CD8-positive, alpha-beta T cell (primary cell): ENCODE measurements at regions of chr3 and their contacts with region 1.

Region 1: DNA sequence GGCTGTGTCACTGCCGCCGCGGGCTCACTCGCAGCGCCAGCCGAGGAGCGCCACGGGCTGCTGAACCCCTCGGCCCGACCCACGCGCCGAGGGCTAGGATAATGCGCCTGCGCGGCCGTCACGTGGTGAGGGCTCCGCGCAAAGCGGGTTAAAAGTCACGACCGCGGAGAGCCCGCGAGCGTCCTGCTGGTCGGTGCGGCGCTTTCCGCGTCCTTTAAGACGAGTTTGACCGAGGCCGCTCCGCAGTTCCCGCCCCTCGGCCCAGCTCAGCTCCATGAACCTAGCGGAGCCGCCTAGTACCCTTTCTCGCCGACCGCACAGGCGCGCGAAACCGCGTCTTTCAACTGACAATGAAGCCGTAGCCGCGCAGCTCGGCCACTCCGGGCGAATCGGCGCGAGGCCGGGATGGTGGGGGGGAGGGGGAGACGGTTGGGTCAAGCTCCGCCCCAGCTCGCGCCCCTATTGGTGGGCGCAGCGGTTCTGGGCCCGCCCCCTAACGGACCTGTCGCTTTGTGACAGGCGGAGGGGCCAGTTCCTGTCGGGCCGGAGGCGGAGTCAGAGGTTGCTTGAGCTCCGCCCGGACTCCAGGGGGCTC is 636 bp upstream of the STT3B start:
- DNase-seq: peak; percentile 97 to 99 (median 98)
- ATAC-seq: peak; percentile 85
- H3K4me3 ChIP-seq: peak overlapping the region; percentile 70 to 94
- H3K4me3 Mint-ChIP-seq: peak overlapping the region; percentile 99
- H3K27ac ChIP-seq: peak overlapping the region; percentile 86 to 99
- H3K27ac Mint-ChIP-seq: peak overlapping the region; percentile 97
- H3K4me1 ChIP-seq: peaks cover 21% of the 10 kb centered on the region
- H3K4me1 Mint-ChIP-seq: peaks cover 30% of the 10 kb centered on the region
- H3K27me3 ChIP-seq: peaks cover 0 to 3% of the 10 kb centered on the region in 2 experiments
- H3K27me3 Mint-ChIP-seq: no peaks in the 10 kb centered on the region
- CTCF ChIP-seq: no peak

Region 2: DNA sequence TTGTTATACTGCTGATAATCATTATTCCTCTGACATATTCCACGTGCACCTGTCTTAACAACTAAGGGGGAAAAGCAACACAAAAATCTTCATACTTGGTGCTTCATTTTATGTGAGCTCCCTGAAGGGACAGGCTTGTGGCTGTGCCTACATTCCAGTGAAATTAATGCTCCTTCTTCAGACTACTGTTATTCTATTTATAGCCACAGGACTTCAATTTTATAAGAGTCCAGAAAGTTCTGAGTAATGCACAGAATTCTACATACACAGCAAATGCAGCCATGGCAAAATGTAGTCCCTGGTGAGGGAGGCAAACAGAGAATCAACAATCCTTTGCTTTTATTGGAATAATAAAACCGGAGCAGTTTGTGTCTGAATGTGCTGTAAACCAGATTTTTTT is 1834.1 kb before region 1 on chr3:
- CTCF ChIA-PET with region 1: no interaction called
- POLR2A ChIA-PET with region 1: no interaction called
- intact Hi-C with region 1: no loop called
- DNase-seq: no peak
- ATAC-seq: no peak
- H3K4me3 ChIP-seq: no peak overlapping the region
- H3K4me3 Mint-ChIP-seq: no peak overlapping the region
- H3K27ac ChIP-seq: no peak overlapping the region
- H3K27ac Mint-ChIP-seq: no peak overlapping the region
- H3K4me1 ChIP-seq: no peaks in the 10 kb centered on the region
- H3K4me1 Mint-ChIP-seq: no peaks in the 10 kb centered on the region
- H3K27me3 ChIP-seq: no peaks in the 10 kb centered on the region
- H3K27me3 Mint-ChIP-seq: no peaks in the 10 kb centered on the region
- CTCF ChIP-seq: no peak

Region 3: DNA sequence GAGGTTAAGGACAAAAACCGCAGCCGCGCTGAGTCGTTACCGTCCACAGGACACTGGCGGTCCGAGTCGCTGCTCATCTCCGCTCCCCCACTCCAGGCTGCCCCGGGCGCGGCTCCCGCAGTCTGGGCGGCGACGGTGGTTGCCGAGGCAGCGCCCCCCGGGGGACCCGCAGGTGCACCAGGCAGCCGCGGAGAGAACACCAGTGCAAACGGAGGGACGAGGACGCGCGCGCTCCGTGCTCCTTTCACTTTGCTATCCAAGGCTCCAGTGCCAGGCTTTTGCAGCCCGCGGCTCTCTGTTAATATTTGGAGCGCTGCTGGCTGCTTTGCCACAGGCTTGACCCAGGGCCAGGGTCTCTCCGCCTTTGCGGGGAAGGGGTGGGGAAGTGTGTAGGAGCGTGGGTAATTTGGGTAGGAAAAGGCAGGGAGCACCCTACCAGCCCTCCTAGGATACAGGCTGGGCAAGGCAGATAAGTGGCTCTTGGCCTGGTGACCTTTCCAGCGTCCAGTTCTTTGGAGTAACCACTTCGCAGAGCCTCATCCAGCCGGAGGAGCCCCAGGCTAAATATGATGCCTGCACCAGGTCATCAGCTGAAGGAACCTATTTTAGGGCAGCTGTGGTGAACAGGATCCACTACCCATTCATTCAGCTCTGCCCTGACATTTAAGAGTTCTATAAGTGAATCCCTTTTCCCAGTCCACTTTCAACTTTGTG is 637.4 kb before region 1 on chr3 and contains the start of gene GADL1:
- CTCF ChIA-PET with region 1: no interaction called
- POLR2A ChIA-PET with region 1: no interaction called
- intact Hi-C with region 1: no loop called
- DNase-seq: peak in 2 of 9 experiments; percentile 2 to 6
- ATAC-seq: no peak
- H3K4me3 ChIP-seq: peak within 1 kb of the TSS in 1 of 2 experiments; percentile 35
- H3K4me3 Mint-ChIP-seq: peak within 1 kb of the TSS; percentile 54
- H3K27ac ChIP-seq: no peak within 1 kb of the TSS
- H3K27ac Mint-ChIP-seq: no peak within 1 kb of the TSS
- H3K4me1 ChIP-seq: no peaks in the 10 kb centered on the region
- H3K4me1 Mint-ChIP-seq: peaks cover 19% of the 10 kb centered on the region
- H3K27me3 ChIP-seq: peaks cover 0 to 6% of the 10 kb centered on the region in 2 experiments
- H3K27me3 Mint-ChIP-seq: peaks cover 24% of the 10 kb centered on the region
- CTCF ChIP-seq: no peak
- total RNA-seq, gene GADL1: not detected

Region 4: DNA sequence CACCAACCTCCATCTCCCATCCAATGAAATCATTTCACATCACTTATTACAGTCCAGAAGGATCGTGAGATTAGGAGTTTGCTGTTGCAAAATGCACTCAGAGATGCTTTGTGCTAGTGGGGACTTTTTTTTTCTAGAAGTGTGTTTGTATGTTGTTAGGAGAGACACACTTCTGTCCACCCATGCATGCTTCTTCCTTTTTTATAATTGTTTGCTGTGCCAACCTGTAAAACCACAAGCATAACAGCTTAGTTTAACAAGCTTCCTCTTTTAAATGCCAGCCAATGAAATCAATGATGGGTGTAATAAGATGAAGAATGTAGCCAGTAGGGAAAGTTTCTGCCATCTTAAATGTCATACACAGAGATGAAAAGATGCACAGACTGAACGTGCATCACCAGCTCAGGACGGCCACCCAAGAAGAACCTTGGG is 304.9 kb before region 1 on chr3:
- CTCF ChIA-PET with region 1: interaction called, 3 read pairs
- POLR2A ChIA-PET with region 1: interaction called, 32 read pairs
- intact Hi-C with region 1: loop called in 1 of 2 experiments (anchors 1 kb)
- DNase-seq: peak in 2 of 9 experiments; percentile 65 to 81
- ATAC-seq: peak; percentile 79
- H3K4me3 ChIP-seq: no peak overlapping the region
- H3K4me3 Mint-ChIP-seq: peak overlapping the region; percentile 35
- H3K27ac ChIP-seq: peak overlapping the region; percentile 52 to 76
- H3K27ac Mint-ChIP-seq: peak overlapping the region; percentile 91
- H3K4me1 ChIP-seq: peaks cover 88% of the 10 kb centered on the region
- H3K4me1 Mint-ChIP-seq: peaks cover 86% of the 10 kb centered on the region
- H3K27me3 ChIP-seq: no peaks in the 10 kb centered on the region
- H3K27me3 Mint-ChIP-seq: no peaks in the 10 kb centered on the region
- CTCF ChIP-seq: no peak

Region 5: DNA sequence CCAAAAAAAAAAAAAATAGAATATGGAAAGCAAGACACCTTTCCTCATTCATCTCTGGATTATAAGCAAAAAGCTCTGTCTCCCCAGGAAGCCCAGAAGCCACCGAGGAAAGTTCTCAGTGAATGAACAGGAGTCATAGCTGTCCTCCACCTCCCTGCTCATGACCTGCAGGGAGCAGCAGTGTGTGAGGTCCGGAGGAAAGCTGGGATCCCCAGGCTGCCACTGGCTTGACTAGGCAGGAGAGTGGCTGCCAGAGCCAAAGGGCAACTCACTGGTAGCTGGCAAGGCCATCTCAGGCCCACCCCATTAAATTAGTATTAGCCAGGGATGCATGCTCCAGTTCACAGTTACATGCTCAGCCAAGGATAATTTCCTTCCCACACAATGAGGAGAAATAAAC is 191.0 kb before region 1 on chr3:
- CTCF ChIA-PET with region 1: no interaction called
- POLR2A ChIA-PET with region 1: no interaction called
- intact Hi-C with region 1: no loop called
- DNase-seq: no peak
- ATAC-seq: no peak
- H3K4me3 ChIP-seq: no peak overlapping the region
- H3K4me3 Mint-ChIP-seq: no peak overlapping the region
- H3K27ac ChIP-seq: no peak overlapping the region
- H3K27ac Mint-ChIP-seq: no peak overlapping the region
- H3K4me1 ChIP-seq: no peaks in the 10 kb centered on the region
- H3K4me1 Mint-ChIP-seq: no peaks in the 10 kb centered on the region
- H3K27me3 ChIP-seq: no peaks in the 10 kb centered on the region
- H3K27me3 Mint-ChIP-seq: no peaks in the 10 kb centered on the region
- CTCF ChIP-seq: no peak

Region 6: DNA sequence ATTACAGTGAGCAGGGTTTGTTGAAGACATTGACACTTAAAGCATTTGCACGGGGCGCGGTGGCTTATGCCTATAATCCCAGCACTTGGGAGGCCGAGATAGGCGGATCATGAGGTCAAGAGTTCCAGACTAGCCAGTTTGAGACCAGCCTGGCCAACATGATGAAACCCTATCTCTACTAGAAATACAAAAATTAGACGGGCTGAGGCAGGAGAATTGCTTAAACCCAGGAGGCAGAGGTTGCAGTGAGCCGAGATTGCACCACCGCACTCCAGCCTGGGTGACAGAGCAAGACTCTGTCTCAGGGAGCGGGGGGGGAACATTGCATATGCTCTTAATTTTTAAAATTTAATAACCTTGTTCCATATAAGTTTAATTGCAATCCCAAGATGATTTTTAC is 12.5 kb after region 1 on chr3:
- CTCF ChIA-PET with region 1: interaction called, 5 read pairs
- POLR2A ChIA-PET with region 1: interaction called, 8 read pairs
- intact Hi-C with region 1: loop called in 1 of 2 experiments (anchors 1 kb)
- DNase-seq: no peak
- ATAC-seq: no peak
- H3K4me3 ChIP-seq: no peak overlapping the region
- H3K4me3 Mint-ChIP-seq: peak overlapping the region; percentile 9
- H3K27ac ChIP-seq: no peak overlapping the region
- H3K27ac Mint-ChIP-seq: peak overlapping the region; percentile 21
- H3K4me1 ChIP-seq: peaks cover 66% of the 10 kb centered on the region
- H3K4me1 Mint-ChIP-seq: peaks cover 86% of the 10 kb centered on the region
- H3K27me3 ChIP-seq: no peaks in the 10 kb centered on the region
- H3K27me3 Mint-ChIP-seq: no peaks in the 10 kb centered on the region
- CTCF ChIP-seq: no peak

Region 7: GRCh38 chr3:31581660-31582059 is 49.6 kb after region 1 on chr3:
- CTCF ChIA-PET with region 1: no interaction called
- POLR2A ChIA-PET with region 1: interaction called, 3 read pairs
- intact Hi-C with region 1: loop called in 1 of 2 experiments (anchors 5 kb)
- DNase-seq: no peak
- ATAC-seq: no peak
- H3K4me3 ChIP-seq: no peak overlapping the region
- H3K4me3 Mint-ChIP-seq: peak overlapping the region; percentile 24
- H3K27ac ChIP-seq: no peak overlapping the region
- H3K27ac Mint-ChIP-seq: no peak overlapping the region
- H3K4me1 ChIP-seq: peaks cover 14% of the 10 kb centered on the region
- H3K4me1 Mint-ChIP-seq: peaks cover 78% of the 10 kb centered on the region
- H3K27me3 ChIP-seq: no peaks in the 10 kb centered on the region
- H3K27me3 Mint-ChIP-seq: no peaks in the 10 kb centered on the region
- CTCF ChIP-seq: no peak

Region 8: GRCh38 chr3:32460031-32460749 is 928.1 kb after region 1 on chr3:
- CTCF ChIA-PET with region 1: no interaction called
- POLR2A ChIA-PET with region 1: no interaction called
- intact Hi-C with region 1: loop called in 1 of 2 experiments (anchors 10 kb)
- DNase-seq: peak; percentile 57 to 97 (median 80)
- ATAC-seq: peak; percentile 72
- H3K4me3 ChIP-seq: peak overlapping the region; percentile 34 to 37
- H3K4me3 Mint-ChIP-seq: peak overlapping the region; percentile 81
- H3K27ac ChIP-seq: peak overlapping the region; percentile 90 to 95
- H3K27ac Mint-ChIP-seq: no peak overlapping the region
- H3K4me1 ChIP-seq: peaks cover 79% of the 10 kb centered on the region
- H3K4me1 Mint-ChIP-seq: peaks cover 38% of the 10 kb centered on the region
- H3K27me3 ChIP-seq: no peaks in the 10 kb centered on the region
- H3K27me3 Mint-ChIP-seq: no peaks in the 10 kb centered on the region
- CTCF ChIP-seq: no peak